Activated T-helper 1 cell treated with anti-CD3 and anti-CD28 coated beads, Interleukin-12 subunit alpha, Interleukin-12 subunit beta, Interleukin-2, Interleukin-4 antibody, amounts not matched to agents 30 ng/mL and 10 ng/mL and 1 ng/mL, durations not matched to agents 14 hours and 24 hours and 36 hours (primary cell): ENCODE measurements at regions of chr10 and their contacts with region 1.

Region 1: GRCh38 chr10:112389147-112389822 is 15.4 kb downstream of the ACSL5 start:
- DNase-seq: peak; percentile 55
- H3K4me3 Mint-ChIP-seq: peak overlapping the region; percentile 57
- H3K27ac Mint-ChIP-seq: peak overlapping the region; percentile 88
- H3K4me1 Mint-ChIP-seq: peaks cover 67% of the 10 kb centered on the region
- H3K27me3 Mint-ChIP-seq: no peaks in the 10 kb centered on the region

Region 2: GRCh38 chr10:112183329-112184051 is 205.8 kb before region 1 on chr10 and contains the start of gene GPAM:
- intact Hi-C with region 1: loop called (anchors 1 kb)
- DNase-seq: peak; percentile 98
- H3K4me3 Mint-ChIP-seq: peak within 1 kb of the TSS; percentile 86
- H3K27ac Mint-ChIP-seq: peak within 1 kb of the TSS; percentile 93
- H3K4me1 Mint-ChIP-seq: peaks cover 34% of the 10 kb centered on the region
- H3K27me3 Mint-ChIP-seq: peaks cover 4% of the 10 kb centered on the region
- total RNA-seq, gene GPAM: 10.2 and 10.5 TPM in 2 replicates

Region 3: GRCh38 chr10:112446855-112447711 is 57.8 kb after region 1 on chr10 and contains the starts of genes VTI1A and ZDHHC6:
- intact Hi-C with region 1: loop called (anchors 1 kb)
- DNase-seq: peak; percentile 80
- H3K4me3 Mint-ChIP-seq: peak within 1 kb of the TSS; percentile 93
- H3K27ac Mint-ChIP-seq: peak within 1 kb of the TSS; percentile 93
- H3K4me1 Mint-ChIP-seq: peaks cover 47% of the 10 kb centered on the region
- H3K27me3 Mint-ChIP-seq: no peaks in the 10 kb centered on the region
- total RNA-seq, gene VTI1A: 39.4 and 39.9 TPM in 2 replicates
- total RNA-seq, gene ZDHHC6: 51.9 and 52.6 TPM in 2 replicates

Region 4: GRCh38 chr10:112532189-112532588 is 142.9 kb after region 1 on chr10:
- intact Hi-C with region 1: loop called (anchors 1 kb)
- DNase-seq: no peak
- H3K4me3 Mint-ChIP-seq: peak overlapping the region; percentile 53
- H3K27ac Mint-ChIP-seq: peak overlapping the region; percentile 11
- H3K4me1 Mint-ChIP-seq: peaks cover 26% of the 10 kb centered on the region
- H3K27me3 Mint-ChIP-seq: peaks cover 8% of the 10 kb centered on the region

Region 5: DNA sequence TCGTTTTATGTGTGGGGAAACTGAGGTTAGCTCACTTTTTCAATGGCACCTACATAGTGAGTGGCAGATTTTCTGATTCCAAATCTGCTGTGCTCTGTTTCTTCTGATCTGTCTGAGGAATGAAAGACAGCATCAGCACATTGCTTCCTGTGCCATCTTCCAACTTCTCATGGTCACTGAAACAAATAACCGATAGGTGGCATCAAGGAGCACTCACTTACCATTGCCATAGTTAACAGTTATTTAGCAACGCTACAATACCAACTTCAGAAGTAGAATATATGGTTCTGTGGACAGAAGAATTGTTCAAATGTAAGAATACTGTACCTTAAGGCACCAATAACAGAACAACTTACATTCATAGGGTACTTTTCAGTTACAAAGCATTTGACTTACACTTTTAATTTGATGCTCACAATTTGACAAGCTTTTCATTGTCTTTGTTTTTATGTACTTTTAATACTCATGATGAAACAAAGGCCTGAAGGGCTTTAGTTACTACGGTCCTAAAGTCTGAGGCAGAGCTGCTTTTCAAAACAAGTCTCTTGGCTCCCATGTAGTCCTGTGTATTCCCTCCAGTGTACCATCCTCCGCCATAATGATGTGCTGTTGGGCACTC is 331.9 kb after region 1 on chr10:
- intact Hi-C with region 1: no loop called
- DNase-seq: no peak
- H3K4me3 Mint-ChIP-seq: no peak overlapping the region
- H3K27ac Mint-ChIP-seq: no peak overlapping the region
- H3K4me1 Mint-ChIP-seq: no peaks in the 10 kb centered on the region
- H3K27me3 Mint-ChIP-seq: no peaks in the 10 kb centered on the region